ENCODE measurements at regions of chr11 and their contacts with region 1.

Region 1: DNA sequence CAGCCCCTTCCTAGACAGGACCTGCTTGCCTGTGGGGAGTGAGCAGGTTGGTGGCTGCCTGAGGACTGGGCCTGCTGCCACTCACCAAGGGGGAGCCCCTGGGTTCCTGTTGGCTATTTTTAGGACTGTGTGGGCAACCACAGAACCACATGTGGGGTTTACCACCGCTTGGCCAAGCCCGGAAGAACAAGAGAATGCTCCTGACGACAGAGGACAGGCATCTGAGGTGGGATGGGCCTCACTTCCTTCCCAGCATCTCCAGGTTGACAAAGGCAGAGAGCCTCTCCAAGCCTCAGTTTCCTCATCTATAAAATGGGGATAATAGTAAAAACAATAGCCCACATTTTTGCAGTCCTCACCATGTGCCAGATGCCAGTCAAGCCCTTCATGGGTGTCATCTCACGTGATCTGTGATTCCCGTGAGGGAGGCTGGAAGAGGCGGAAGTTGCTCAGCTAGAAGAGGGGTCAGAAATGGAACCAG is 43.6 kb downstream of the LRRC32 start:
- DNase-seq: peak; percentile 84
- H3K4me3 ChIP-seq: peak overlapping the region; percentile 0
- H3K27ac ChIP-seq: peak overlapping the region; percentile 31
- H3K4me1 ChIP-seq: peaks cover 47% of the 10 kb centered on the region
- CTCF ChIP-seq: no peak

Region 2: DNA sequence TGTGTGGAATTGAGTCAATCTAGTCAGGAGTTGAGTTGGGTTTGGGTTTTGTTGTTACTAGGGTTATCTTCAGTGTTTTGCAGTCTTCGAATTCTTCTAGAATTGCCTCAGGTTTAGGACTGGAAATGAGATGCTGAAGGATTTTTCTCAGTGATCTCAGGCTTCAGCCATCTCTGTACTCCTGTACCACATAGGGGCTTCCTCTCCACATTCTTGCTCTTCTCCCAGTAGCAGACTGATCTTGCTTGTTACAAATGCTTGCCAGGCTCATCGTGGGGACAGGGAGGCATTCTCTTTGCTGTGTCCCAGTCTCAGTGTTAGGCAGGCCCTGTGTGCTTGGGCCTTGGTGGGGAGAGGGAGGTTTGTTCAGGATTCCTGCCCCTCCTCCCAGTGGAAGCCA is 52.6 kb before region 1 on chr11:
- CTCF ChIA-PET with region 1: no interaction called
- POLR2A ChIA-PET with region 1: no interaction called
- intact Hi-C with region 1: no loop called
- DNase-seq: no peak
- H3K4me3 ChIP-seq: no peak overlapping the region
- H3K27ac ChIP-seq: no peak overlapping the region
- H3K4me1 ChIP-seq: no peaks in the 10 kb centered on the region
- CTCF ChIP-seq: no peak

Region 3: DNA sequence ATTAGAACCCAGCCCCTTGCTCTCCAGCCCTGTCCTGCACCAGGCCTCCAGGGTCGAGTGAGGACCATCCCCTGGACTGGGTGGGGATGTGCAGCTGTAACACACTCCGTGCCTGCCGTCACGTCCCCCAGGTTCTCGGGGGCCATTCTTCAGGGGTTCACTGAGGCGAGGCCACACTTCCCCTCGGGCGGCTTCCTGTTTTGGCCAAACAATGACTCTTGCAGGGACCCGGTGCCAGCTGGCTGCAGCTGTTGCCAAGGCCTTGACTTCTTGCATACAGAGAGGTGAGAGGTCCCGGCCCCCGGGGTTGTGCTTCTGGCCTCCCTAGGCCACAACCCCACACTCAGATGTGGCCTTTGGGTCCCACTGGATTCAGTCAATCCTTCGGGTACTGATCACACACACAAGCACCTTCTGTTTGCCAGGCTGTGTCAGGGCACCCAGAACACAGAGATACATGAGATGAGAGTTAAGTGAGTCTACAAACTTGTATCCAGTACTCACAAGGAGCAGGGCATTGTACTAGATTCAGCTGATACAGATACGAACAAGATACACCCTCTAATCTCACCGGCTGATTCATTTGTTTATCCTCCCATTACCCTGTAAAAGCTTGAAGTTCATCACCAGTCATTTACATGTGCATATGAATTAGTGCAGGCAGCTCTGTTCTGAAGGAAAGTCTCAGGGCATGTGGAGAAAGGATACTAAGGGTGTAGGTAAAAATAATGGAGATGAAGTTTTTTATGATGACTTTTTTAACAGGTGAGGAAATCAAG is 10.7 kb after region 1 on chr11:
- CTCF ChIA-PET with region 1: interaction called, 6 read pairs
- POLR2A ChIA-PET with region 1: interaction called, 17 read pairs
- intact Hi-C with region 1: no loop called
- DNase-seq: peak; percentile 98
- H3K4me3 ChIP-seq: peak overlapping the region; percentile 32
- H3K27ac ChIP-seq: peak overlapping the region; percentile 88
- H3K4me1 ChIP-seq: peaks cover 50% of the 10 kb centered on the region
- CTCF ChIP-seq: no peak

Region 4: DNA sequence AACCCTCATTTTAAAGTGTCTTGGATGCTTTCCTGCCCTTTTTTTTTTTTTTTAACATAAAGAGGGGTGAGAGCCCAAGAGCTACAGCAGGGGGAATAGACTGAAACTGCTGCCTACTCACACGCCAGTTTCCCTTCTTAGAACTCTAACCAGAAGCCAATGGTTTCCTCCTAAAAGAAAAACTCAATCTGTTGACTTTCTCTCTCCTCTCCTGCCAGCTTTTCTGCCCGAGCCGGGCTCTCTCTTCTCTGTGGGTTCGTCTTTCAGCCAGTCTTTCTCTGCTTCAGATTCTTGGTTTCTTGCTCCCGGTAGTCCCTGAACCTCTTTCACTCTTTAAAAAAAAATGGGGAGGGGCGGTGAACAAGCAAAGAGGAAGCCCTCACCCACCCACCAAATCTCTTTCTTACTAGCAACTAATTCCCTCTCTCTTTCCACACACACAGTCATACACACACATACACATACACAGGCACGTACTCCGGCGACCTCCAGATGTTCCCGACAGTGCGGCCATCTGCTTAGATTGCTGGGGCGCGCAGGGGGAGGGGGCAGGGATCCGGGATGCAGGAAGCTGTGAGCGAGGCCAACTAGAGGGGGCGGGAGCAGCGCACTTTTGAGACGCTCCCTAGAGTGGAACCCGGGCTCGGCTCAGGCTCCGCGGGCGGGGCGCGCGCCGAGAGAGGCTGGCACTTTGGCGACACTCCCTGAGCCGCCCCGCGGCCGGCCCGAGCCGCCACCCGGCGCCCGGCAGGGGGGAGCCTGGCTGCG is 155.7 kb after region 1 on chr11:
- CTCF ChIA-PET with region 1: no interaction called
- POLR2A ChIA-PET with region 1: no interaction called
- intact Hi-C with region 1: no loop called
- DNase-seq: peak; percentile 89
- H3K4me3 ChIP-seq: peak overlapping the region; percentile 71
- H3K27ac ChIP-seq: peak overlapping the region; percentile 37
- H3K4me1 ChIP-seq: no peaks in the 10 kb centered on the region
- CTCF ChIP-seq: no peak

Measured in OCI-LY7 (cell line).